GM18951 (cell line): ENCODE measurements at regions of chr3 and their contacts with region 1.

Region 1: DNA sequence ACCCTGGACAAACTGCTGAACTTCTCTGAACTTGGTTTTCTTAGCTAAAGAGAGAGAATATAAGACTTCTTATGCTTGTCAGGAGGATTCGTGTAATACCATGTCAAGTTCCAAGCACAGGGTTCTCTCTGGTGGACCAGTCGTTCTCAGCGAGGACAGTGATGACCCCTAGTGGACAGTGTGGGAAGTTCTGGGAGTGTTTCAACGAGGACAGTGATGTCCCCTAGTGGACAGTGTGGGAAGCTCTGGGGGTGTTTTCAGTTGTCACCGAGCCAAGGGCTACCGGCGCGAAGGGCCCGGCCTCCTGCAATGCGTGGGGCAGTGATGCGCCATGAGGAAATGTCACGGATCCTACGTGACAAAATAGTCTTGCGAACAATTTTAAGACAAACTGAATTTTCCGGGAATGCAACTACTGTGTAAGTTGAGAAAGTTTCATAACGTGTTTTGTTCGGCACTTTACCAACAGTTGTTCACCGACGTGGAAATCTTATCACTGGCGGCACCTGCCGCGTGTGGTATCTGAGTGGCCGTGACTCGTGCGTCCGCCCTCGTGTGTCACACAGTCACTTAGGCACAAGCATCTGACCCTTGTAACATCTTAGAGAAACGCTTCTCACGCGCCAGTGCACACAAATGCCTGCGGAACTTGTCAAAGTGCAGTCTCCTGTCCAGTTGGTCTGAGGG is 39.3 kb upstream of the MUC4 start:
- POLR2A ChIP-seq: no peak

Region 2: GRCh38 chr3:194879991-194880939 is 970.7 kb before region 1 on chr3:
- in situ Hi-C with region 1: no loop called
- POLR2A ChIP-seq: no peak

Region 3: DNA sequence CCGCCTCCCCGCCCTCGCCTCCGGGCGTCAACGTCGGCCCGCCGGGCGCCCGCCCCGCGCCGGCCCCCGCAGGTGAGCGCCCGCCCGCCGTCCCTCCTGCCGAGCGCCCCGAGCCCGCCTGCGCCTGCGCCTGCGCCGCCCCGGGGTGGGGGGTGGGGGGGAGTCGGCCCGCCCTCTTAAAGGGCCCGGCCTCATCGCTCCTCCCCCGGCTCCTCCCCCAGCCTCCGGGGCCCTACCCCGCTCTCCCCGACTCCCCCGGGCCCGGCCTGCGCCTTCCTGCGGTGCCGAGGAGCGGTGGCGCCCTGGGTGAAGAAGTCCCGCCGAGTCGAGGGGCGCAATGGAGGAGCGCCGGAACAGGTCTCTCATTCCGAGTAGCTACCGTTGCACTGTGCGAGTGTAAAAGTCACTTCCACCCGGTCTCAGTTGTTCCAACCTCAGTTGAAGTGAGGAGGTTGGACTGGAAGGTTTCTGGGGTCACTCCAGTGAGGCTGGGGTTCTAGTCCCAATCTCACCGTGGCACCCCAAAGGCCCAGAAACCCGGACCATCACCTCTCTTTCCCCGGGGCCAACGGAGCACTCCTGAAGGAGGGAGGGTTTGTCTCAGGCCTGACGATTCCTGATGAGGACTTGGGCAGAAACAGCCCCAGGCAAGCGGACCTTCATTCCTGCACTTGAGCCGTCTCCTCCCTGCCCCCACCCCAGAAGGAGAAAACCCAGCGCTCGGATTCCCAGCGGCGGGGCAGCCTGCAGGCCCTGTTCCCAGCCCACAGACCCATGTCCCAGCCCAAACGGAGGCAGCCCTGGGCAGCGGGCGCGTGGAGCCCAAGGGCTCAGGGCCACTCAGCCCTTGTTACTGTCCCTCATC is 58.9 kb after region 1 on chr3:
- in situ Hi-C with region 1: loop called (anchors 10 kb)
- POLR2A ChIP-seq: peak; percentile 62

Region 4: DNA sequence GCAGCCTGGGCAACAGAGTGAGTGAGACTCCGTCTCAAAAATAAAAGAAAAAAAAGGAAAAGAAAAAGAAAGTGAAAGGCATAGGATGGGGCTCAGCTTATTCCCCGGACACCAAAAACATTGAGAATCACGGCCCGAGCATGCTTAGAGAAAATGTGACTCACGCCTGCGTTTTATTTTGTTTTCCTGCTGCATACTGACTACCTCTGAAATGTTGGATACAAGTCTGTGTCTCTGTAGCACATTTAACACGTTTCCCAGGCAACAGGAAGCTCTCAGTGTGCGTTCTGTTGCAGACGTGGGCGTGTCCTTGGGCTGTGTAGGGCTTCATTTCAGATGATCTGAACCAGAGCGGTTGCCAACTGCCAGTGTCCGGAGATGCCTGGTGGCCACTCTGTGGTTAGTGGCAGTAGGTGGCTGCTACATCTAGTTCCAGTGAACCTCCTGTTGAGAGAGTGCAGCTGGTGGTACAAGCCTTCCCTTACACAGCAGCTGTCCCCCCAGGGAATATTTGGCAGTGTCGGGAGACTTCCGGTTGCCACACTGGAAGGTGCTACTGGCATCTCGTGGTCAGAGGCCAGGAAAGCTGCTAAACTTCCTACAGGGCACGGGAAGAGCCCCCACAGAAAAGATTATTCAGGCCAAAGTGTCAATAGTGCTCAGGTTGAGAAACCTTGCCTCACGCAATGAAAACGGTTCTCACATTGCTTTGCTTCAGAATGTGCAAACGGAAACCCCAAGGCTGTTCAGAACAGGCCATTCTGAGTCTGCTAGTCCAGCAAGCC is 368.4 kb after region 1 on chr3:
- in situ Hi-C with region 1: loop called (anchors 25 kb)
- POLR2A ChIP-seq: no peak